Colonic mucosa (tissue), 4 donors: ENCODE measurements at regions of chr10 and their contacts with region 1.

Region 1: DNA sequence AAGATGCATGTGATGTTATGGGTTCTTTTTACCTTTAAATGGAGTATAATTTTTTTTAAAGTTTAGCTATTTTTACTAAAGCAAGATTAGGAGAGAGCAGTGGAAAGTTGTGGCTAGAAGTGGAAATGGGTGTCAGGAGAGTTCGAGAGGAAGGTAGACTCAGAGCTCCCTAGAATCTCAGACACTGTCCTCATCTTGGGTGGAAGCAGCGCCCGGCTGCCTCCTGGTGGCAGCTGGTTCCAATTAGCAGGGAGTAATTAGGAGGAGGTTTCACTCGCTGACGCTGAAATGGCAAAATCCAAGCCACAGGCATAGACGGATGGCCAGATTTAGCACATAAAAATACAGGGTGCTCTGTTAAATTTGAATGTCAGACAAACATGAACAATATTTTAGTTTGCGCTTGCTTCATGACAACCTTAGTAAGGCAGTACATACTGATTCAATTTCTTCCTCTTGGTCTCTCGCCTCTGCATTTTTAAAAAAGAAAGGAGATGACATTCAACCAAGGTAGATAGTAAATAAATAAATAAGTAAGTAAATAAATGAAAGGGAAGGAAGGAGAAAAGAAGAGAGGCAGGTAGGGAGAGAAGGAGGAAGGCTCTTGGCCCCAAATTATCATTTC is 58.5 kb downstream of the LGI1 start:
- DNase-seq: peak; percentile 71
- H3K4me3 ChIP-seq: no peak overlapping the region
- H3K27ac ChIP-seq: no peak overlapping the region
- H3K4me1 ChIP-seq: no peaks in the 10 kb centered on the region
- H3K27me3 ChIP-seq: no peaks in the 10 kb centered on the region
- CTCF ChIP-seq: peak; percentile 61

Region 2: GRCh38 chr10:93702211-93703001 is 113.8 kb before region 1 on chr10 and contains the start of gene FRA10AC1:
- intact Hi-C with region 1: loop called (anchors 5 kb)
- DNase-seq: peak; percentile 94
- H3K4me3 ChIP-seq: peak within 1 kb of the TSS; percentile 61
- H3K27ac ChIP-seq: peak within 1 kb of the TSS; percentile 76
- H3K4me1 ChIP-seq: peaks cover 8% of the 10 kb centered on the region
- H3K27me3 ChIP-seq: no peaks in the 10 kb centered on the region
- CTCF ChIP-seq: no peak
- total RNA-seq, gene FRA10AC1: 13.5 to 19.4 TPM

Region 3: DNA sequence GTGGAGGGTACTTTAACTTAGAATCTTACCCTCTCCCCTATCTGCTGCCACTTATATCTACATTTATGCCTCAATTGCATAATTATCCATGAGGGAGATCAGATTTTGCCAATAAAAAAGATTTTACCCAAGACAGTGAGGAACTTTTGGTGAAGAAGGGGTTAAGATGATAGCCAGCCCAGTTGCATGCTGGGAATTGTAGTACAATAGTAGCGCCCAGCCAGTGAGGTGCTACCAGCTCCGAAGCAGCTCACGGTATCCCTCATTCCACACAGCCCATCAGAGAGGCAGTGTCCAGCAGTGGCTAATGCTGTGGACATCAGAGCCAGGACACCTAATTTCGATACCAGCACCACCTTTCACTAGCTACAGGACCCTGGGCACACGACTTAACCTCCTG is 64.4 kb before region 1 on chr10:
- intact Hi-C with region 1: loop called (anchors 5 kb)
- DNase-seq: peak; percentile 41
- H3K4me3 ChIP-seq: no peak overlapping the region
- H3K27ac ChIP-seq: no peak overlapping the region
- H3K4me1 ChIP-seq: no peaks in the 10 kb centered on the region
- H3K27me3 ChIP-seq: no peaks in the 10 kb centered on the region
- CTCF ChIP-seq: no peak